Activated B cell treated with CpG ODN at 0.5 μM for 24 hours (primary cell): ENCODE measurements at regions of chr19 and their contacts with region 1.

Region 1: GRCh38 chr19:41353466-41354342 is at the start of gene TGFB1:
- DNase-seq: peak; percentile 92
- ATAC-seq: peak; percentile 70
- H3K4me3 Mint-ChIP-seq: peak within 1 kb of the TSS; percentile 100
- H3K27ac Mint-ChIP-seq: peak within 1 kb of the TSS; percentile 96
- H3K4me1 Mint-ChIP-seq: peaks cover 44% of the 10 kb centered on the region
- H3K27me3 Mint-ChIP-seq: no peaks in the 10 kb centered on the region
- CTCF ChIP-seq: peak; percentile 66
- total RNA-seq, gene TGFB1: 80.7 and 88.5 TPM in 2 replicates

Region 2: DNA sequence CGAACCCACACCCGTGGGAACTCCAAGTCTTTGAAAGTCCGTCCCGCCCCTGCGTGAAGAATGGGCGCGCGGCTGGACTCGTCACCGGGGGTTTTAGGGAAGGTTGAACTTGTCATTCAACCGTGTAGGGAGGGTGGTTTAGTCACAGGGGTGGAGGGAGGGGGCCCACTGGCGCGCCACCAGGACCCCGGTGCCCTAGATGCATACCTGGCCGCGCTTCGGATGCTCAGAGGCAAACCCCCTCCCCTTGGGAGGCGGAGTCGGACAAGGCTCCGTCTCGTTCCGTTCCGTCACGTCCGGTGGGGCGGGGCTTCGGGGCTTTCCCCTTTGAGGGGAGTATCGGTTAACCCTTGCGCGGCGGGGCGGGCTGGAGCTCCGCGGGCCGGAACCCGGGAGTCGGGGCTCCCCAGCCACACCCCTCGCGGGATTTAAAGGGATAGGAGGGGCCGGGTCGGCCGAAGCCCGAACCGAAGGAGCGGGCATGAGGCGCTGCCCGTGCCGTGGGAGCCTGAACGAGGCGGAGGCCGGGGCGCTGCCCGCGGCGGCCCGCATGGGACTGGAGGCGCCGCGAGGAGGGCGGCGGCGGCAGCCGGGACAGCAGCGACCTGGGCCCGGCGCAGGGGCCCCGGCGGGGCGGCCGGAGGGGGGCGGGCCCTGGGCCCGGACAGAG is 636.9 kb before region 1 on chr19 and contains the starts of genes COQ8B and ITPKC:
- CTCF ChIA-PET with region 1: no interaction called
- POLR2A ChIA-PET with region 1: no interaction called
- intact Hi-C with region 1: loop called (anchors 5 kb)
- DNase-seq: peak; percentile 100
- ATAC-seq: peak; percentile 70
- H3K4me3 Mint-ChIP-seq: peak within 1 kb of the TSS; percentile 90
- H3K27ac Mint-ChIP-seq: peak within 1 kb of the TSS; percentile 95
- H3K4me1 Mint-ChIP-seq: peaks cover 63% of the 10 kb centered on the region
- H3K27me3 Mint-ChIP-seq: no peaks in the 10 kb centered on the region
- CTCF ChIP-seq: no peak
- total RNA-seq, gene COQ8B: 34.4 and 38.5 TPM in 2 replicates
- total RNA-seq, gene ITPKC: 13.0 and 13.3 TPM in 2 replicates

Region 3: DNA sequence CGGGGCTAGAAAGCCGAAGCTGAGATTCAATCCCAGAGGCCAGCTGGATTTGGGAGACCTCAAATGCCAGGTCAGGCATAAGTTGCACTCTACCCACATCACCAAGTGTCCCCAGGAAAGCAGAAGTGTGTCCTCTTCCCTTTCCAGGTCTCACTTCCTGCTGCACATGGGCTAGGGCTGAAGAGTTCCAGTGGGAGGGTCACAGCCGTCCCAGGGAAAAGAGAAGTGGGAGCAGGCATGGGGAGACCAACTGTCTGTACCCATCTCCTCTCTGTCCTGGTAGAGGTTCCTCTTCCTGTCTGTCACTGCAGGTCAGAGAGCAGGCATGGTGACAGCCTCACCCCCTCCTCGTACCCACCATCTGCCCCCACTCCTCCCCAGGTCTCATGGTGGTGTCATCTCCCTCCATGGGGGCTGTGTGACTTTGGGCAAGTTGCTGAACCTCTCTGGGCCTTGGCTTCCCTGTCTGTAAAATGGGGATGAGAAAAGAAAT is 119.9 kb before region 1 on chr19:
- CTCF ChIA-PET with region 1: no interaction called
- POLR2A ChIA-PET with region 1: no interaction called
- intact Hi-C with region 1: no loop called
- DNase-seq: no peak
- ATAC-seq: no peak
- H3K4me3 Mint-ChIP-seq: no peak overlapping the region
- H3K27ac Mint-ChIP-seq: no peak overlapping the region
- H3K4me1 Mint-ChIP-seq: no peaks in the 10 kb centered on the region
- H3K27me3 Mint-ChIP-seq: peaks cover 12% of the 10 kb centered on the region
- CTCF ChIP-seq: no peak

Region 4: GRCh38 chr19:41310033-41310758 is 43.5 kb before region 1 on chr19 and contains the start of gene CCDC97:
- CTCF ChIA-PET with region 1: interaction called, 26 read pairs
- POLR2A ChIA-PET with region 1: interaction called, 76 read pairs
- intact Hi-C with region 1: loop called (anchors 1 kb)
- DNase-seq: peak; percentile 92
- ATAC-seq: peak; percentile 76
- H3K4me3 Mint-ChIP-seq: peak within 1 kb of the TSS; percentile 99
- H3K27ac Mint-ChIP-seq: peak within 1 kb of the TSS; percentile 100
- H3K4me1 Mint-ChIP-seq: peaks cover 65% of the 10 kb centered on the region
- H3K27me3 Mint-ChIP-seq: no peaks in the 10 kb centered on the region
- CTCF ChIP-seq: no peak
- total RNA-seq, gene CCDC97: 61.7 and 65.3 TPM in 2 replicates

Region 5: GRCh38 chr19:41327576-41328156 is 26.0 kb before region 1 on chr19:
- CTCF ChIA-PET with region 1: interaction called, 18 read pairs
- POLR2A ChIA-PET with region 1: interaction called, 119 read pairs
- intact Hi-C with region 1: loop called (anchors 1 kb)
- DNase-seq: peak; percentile 77
- ATAC-seq: peak; percentile 71
- H3K4me3 Mint-ChIP-seq: peak overlapping the region; percentile 77
- H3K27ac Mint-ChIP-seq: peak overlapping the region; percentile 91
- H3K4me1 Mint-ChIP-seq: peaks cover 70% of the 10 kb centered on the region
- H3K27me3 Mint-ChIP-seq: no peaks in the 10 kb centered on the region
- CTCF ChIP-seq: no peak

Region 6: GRCh38 chr19:41341669-41342490 is 11.8 kb before region 1 on chr19:
- CTCF ChIA-PET with region 1: no interaction called
- POLR2A ChIA-PET with region 1: interaction called, 9 read pairs
- intact Hi-C with region 1: loop called (anchors 1 kb)
- DNase-seq: no peak
- ATAC-seq: no peak
- H3K4me3 Mint-ChIP-seq: no peak overlapping the region
- H3K27ac Mint-ChIP-seq: peak overlapping the region; percentile 77
- H3K4me1 Mint-ChIP-seq: peaks cover 42% of the 10 kb centered on the region
- H3K27me3 Mint-ChIP-seq: no peaks in the 10 kb centered on the region
- CTCF ChIP-seq: no peak

Region 7: GRCh38 chr19:41397086-41398049 is 43.7 kb after region 1 on chr19 and contains the starts of genes BCKDHA and EXOSC5:
- CTCF ChIA-PET with region 1: no interaction called
- POLR2A ChIA-PET with region 1: interaction called, 9 read pairs
- intact Hi-C with region 1: loop called (anchors 1 kb)
- DNase-seq: peak; percentile 95
- ATAC-seq: peak; percentile 98
- H3K4me3 Mint-ChIP-seq: peak within 1 kb of the TSS; percentile 98
- H3K27ac Mint-ChIP-seq: peak within 1 kb of the TSS; percentile 99
- H3K4me1 Mint-ChIP-seq: peaks cover 47% of the 10 kb centered on the region
- H3K27me3 Mint-ChIP-seq: no peaks in the 10 kb centered on the region
- CTCF ChIP-seq: no peak
- total RNA-seq, gene BCKDHA: 22.2 and 25.2 TPM in 2 replicates
- total RNA-seq, gene EXOSC5: 30.1 and 31.6 TPM in 2 replicates

Region 8: DNA sequence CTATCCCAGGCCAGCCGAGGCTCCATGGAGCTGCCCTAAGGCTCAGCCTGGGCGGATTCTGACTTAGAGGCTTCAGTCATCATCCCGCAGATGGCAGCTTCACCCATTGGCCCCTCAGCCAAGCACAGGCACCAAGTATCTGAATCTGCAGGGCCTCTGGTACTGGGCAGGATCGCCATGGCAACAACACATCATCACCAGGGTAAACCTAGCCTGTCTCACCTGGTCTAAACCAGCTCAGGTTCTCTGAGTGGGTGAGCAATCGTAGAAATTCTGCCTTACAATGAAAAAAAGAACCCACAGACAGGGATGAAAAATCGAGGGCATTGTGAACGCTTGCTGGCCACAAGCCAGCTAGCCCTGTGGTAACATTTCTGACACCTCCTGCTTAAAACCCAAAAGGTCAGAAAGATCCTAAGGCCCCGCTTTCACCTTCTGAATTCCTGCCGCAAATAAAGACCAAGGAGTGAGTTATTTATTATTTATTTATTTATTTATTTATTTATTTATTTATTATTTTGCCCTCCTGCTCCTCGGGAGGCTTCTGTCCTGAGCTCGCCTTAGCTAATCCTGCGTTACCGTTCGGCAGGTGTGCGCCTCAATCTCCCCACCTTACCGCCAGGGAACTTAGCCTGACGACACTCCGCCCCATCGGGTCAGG is 210.3 kb after region 1 on chr19:
- CTCF ChIA-PET with region 1: interaction called, 5 read pairs
- POLR2A ChIA-PET with region 1: interaction called, 4 read pairs
- intact Hi-C with region 1: loop called (anchors 5 kb)
- DNase-seq: no peak
- ATAC-seq: peak; percentile 51
- H3K4me3 Mint-ChIP-seq: peak overlapping the region; percentile 83
- H3K27ac Mint-ChIP-seq: peak overlapping the region; percentile 53
- H3K4me1 Mint-ChIP-seq: peaks cover 55% of the 10 kb centered on the region
- H3K27me3 Mint-ChIP-seq: peaks cover 9% of the 10 kb centered on the region
- CTCF ChIP-seq: no peak